ENCODE measurements at regions of chr12 and their contacts with region 1.

Region 1: GRCh38 chr12:50246873-50247612 is 36.3 kb downstream of the LIMA1 start:
- DNase-seq: peak; percentile 69 to 86
- ATAC-seq: peak; percentile 84 to 95
- H3K4me3 ChIP-seq: no peak overlapping the region; the same call in 2 of the 3 replicates
- H3K27ac ChIP-seq: peak overlapping the region; percentile 65 to 78
- H3K4me1 ChIP-seq: peaks cover 58% of the 10 kb centered on the region
- CTCF ChIP-seq: no peak
- EP300 ChIP-seq: peak in 1 of 2 experiments; percentile 34; a peak in 2 of 5 replicates
- POLR2A ChIP-seq: no peak
- RAD21 ChIP-seq: no peak

Region 2: DNA sequence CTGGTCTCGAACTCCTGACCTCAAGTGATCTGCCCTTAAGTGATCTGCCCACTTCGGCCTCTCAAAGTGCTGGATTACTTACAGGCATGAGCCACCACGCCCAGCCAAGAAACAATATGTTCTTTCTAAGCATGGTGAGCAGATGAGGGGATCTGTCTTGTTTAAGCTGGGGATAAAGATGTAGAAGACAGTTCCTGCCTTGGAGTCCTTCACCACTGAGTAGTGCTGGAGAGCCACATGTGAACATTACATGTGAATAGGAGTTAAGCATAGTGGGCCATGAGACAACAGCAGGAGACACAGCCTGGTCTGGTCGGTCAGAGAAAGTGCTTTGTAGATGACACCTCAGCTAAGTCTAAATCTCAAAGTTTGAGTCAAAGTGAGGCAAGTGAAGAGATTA is 479.7 kb before region 1 on chr12:
- CTCF ChIA-PET with region 1: no interaction called
- POLR2A ChIA-PET with region 1: no interaction called
- DNase-seq: no peak
- ATAC-seq: peak; percentile 52; a peak in 5 of 6 replicates
- H3K4me3 ChIP-seq: no peak overlapping the region
- H3K27ac ChIP-seq: no peak overlapping the region
- H3K4me1 ChIP-seq: no peaks in the 10 kb centered on the region
- CTCF ChIP-seq: no peak
- EP300 ChIP-seq: no peak
- POLR2A ChIP-seq: no peak
- RAD21 ChIP-seq: no peak

Region 3: DNA sequence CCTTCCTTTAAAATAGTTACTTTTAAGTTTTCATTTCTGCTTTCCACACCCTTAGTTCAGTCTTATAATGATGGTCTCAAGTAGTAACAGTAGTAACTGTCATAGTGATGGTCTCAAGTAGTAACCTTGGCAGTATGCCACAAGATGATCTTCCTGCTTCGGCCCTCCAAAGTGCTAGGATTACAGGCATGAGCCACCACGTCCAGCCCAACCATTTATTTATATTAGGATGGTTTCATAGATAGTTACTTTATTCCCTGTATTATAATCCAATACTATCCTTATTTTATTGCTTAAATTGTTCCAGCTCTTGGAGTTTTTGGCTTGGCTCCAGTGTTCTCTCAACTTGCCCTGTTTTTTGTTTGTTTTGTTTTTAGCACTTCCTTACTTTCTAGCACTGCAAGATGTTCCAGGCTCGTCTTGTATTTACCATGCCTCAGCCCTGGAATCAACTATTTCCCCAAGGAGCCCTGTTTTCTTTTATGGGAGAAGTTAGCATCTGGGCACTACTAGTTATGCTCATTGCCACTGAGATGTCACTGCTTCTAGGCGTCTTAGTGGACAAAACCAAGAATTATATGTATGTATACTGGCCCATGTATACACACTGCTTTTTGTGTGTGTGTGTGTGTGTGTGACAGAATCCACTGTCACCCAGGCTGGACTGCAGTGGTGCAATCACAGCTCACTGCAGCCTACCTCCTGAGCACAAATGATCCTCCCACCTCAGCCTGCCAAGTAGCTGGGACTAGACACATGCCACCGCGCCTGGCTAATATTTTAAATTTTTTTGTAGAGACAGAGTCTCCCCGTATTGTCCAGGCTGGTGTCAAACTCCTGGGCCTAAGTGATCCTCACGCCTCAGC is 10.9 kb after region 1 on chr12:
- CTCF ChIA-PET with region 1: interaction called, 4 read pairs
- POLR2A ChIA-PET with region 1: interaction called, 10 read pairs
- DNase-seq: peak in 1 of 2 experiments; percentile 44
- ATAC-seq: peak; percentile 70 to 71
- H3K4me3 ChIP-seq: no peak overlapping the region
- H3K27ac ChIP-seq: peak overlapping the region; percentile 25 to 37; a peak in 4 of 6 replicates
- H3K4me1 ChIP-seq: peaks cover 60% of the 10 kb centered on the region
- CTCF ChIP-seq: no peak
- EP300 ChIP-seq: no peak
- POLR2A ChIP-seq: no peak
- RAD21 ChIP-seq: no peak

Measured in A549 (cell line).